CD8-positive, alpha-beta T cell (primary cell): ENCODE measurements at regions of chr10 and their contacts with region 1.

Region 1: DNA sequence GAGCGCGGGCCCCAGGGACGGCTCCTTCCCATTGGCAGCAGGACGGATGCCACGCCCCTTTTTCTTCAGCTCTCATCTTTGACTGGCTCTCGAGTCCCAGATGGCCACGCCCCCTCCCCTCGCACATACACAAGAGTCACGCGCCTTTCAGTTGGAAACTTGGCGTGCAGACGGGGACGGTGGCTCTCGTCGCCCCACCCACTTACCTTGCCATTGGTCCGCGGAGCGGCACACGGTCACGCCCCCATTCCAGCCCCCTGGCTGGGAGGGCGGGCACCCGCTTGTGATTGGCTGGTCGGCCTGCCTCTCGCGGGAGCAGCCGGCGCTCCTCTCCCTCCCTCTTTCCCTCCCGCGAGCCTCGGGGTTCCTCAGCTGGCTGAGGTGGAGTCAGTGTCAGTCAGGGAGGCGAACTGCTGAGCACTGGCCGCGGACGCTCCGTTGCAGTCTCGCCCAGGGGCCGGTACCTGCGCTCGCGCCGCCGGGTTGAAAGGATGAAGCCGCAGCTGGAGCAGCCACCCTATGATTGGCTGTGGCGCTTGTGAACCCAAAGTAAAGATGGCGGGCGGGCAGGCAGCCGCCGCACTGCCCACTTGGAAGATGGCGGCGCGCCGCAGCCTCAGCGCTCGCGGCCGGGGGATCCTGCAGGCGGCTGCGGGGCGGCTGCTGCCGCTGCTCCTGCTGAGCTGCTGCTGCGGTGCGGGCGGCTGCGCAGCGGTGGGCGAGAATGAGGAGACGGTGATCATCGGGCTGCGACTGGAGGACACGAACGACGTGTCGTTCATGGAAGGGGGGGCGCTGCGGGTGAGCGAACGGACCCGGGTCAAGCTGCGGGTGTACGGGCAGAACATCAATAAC is at the start of gene CNNM2:
- DNase-seq: peak; percentile 99 to 100 (median 100)
- ATAC-seq: peak; percentile 89
- H3K4me3 ChIP-seq: peak within 1 kb of the TSS; percentile 95 to 99
- H3K4me3 Mint-ChIP-seq: peak within 1 kb of the TSS; percentile 96
- H3K27ac ChIP-seq: peak within 1 kb of the TSS; percentile 84 to 94
- H3K27ac Mint-ChIP-seq: peak within 1 kb of the TSS; percentile 95
- H3K4me1 ChIP-seq: peaks cover 44% of the 10 kb centered on the region
- H3K4me1 Mint-ChIP-seq: peaks cover 55% of the 10 kb centered on the region
- H3K27me3 ChIP-seq: peaks cover 0 to 2% of the 10 kb centered on the region in 2 experiments
- H3K27me3 Mint-ChIP-seq: peaks cover 9% of the 10 kb centered on the region
- CTCF ChIP-seq: no peak
- total RNA-seq, gene CNNM2: 9.5 to 9.6 TPM

Region 2: DNA sequence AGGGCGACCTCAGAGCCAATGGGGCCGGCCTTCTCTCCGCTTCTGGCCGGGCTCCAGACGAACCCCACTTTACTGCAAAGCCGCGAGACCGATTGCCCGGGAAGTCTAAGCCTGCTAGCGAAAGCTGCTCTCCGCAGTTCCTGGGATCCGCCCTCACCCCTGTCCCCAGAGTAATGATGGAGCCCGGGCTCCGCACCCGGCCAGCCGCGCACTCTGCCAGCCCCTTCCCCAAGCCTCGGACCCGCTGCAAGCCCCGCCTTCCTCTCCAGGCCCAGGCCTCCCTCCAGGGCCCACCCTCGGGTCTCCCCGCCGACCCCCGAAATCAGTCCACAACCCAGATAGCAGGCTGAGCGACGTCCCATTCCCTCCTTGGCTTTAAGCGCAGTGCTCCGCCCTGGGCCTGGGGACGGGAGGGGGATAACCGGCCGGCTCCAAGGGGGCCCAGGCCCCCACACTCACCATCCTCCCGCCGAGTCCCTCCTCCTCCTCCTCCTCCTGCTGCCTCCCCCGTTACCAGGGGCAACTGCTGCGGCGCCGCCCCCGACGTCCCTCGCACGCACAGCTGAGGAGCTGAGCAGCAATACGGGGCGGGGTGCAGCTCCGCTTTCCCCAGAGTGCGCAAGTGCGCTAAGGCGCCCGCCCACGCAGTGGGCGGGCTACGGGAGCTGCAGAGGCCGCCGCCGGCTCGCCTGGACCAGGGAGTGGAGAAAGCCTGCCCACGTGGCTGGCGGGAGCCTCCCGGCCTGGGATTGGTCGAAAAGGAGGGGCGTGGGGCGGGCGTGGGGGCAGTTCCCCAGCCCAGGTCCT is 204.2 kb before region 1 on chr10 and contains the start of gene ARL3:
- CTCF ChIA-PET with region 1: no interaction called
- POLR2A ChIA-PET with region 1: no interaction called
- intact Hi-C with region 1: loop called in 1 of 2 experiments (anchors 10 kb)
- DNase-seq: peak; percentile 79 to 98 (median 94)
- ATAC-seq: peak; percentile 89
- H3K4me3 ChIP-seq: peak within 1 kb of the TSS; percentile 96 to 98
- H3K4me3 Mint-ChIP-seq: peak within 1 kb of the TSS; percentile 97
- H3K27ac ChIP-seq: peak within 1 kb of the TSS; percentile 84 to 91
- H3K27ac Mint-ChIP-seq: peak within 1 kb of the TSS; percentile 94
- H3K4me1 ChIP-seq: peaks cover 21% of the 10 kb centered on the region
- H3K4me1 Mint-ChIP-seq: peaks cover 59% of the 10 kb centered on the region
- H3K27me3 ChIP-seq: no peaks in the 10 kb centered on the region
- H3K27me3 Mint-ChIP-seq: no peaks in the 10 kb centered on the region
- CTCF ChIP-seq: peak; percentile 65
- total RNA-seq, gene ARL3: 0.49 to 0.75 TPM

Region 3: GRCh38 chr10:102752934-102753664 is 165.1 kb before region 1 on chr10:
- CTCF ChIA-PET with region 1: no interaction called
- POLR2A ChIA-PET with region 1: no interaction called
- intact Hi-C with region 1: no loop called
- DNase-seq: peak in 3 of 9 experiments; percentile 23 to 60 (median 41)
- ATAC-seq: peak; percentile 86
- H3K4me3 ChIP-seq: no peak overlapping the region
- H3K4me3 Mint-ChIP-seq: no peak overlapping the region
- H3K27ac ChIP-seq: no peak overlapping the region
- H3K27ac Mint-ChIP-seq: peak overlapping the region; percentile 58
- H3K4me1 ChIP-seq: peaks cover 18% of the 10 kb centered on the region
- H3K4me1 Mint-ChIP-seq: peaks cover 44% of the 10 kb centered on the region
- H3K27me3 ChIP-seq: no peaks in the 10 kb centered on the region
- H3K27me3 Mint-ChIP-seq: no peaks in the 10 kb centered on the region
- CTCF ChIP-seq: peak; percentile 61

Region 4: DNA sequence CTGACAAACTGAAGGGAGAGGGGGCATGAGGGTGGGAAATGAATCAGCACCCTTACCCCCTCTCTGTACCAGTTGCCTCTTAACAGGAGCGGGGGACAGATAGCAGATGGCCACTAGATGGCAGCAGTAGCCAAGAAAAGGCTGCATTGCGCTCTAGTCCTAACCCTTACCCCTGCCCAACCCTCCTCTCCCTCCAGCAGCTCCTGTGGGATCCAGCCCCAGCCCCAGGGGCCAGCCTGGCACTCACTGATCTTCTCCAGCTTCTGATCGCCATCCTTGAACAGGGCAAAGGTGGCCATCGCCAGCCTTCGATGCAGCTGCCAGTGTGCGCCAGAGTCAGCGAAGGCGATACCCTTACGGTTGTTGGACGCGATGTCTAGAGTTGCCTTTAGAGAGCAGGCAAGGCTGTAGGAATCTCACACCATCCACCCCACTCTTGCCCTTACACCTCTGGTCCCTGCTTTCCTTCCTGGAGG is 83.1 kb before region 1 on chr10:
- CTCF ChIA-PET with region 1: interaction called, 3 read pairs
- POLR2A ChIA-PET with region 1: no interaction called
- intact Hi-C with region 1: loop called in 1 of 2 experiments (anchors 5 kb)
- DNase-seq: peak; percentile 46 to 83 (median 77)
- ATAC-seq: peak; percentile 98
- H3K4me3 ChIP-seq: no peak overlapping the region
- H3K4me3 Mint-ChIP-seq: no peak overlapping the region
- H3K27ac ChIP-seq: no peak overlapping the region
- H3K27ac Mint-ChIP-seq: no peak overlapping the region
- H3K4me1 ChIP-seq: no peaks in the 10 kb centered on the region
- H3K4me1 Mint-ChIP-seq: no peaks in the 10 kb centered on the region
- H3K27me3 ChIP-seq: peaks cover 0 to 3% of the 10 kb centered on the region in 2 experiments
- H3K27me3 Mint-ChIP-seq: peaks cover 2% of the 10 kb centered on the region
- CTCF ChIP-seq: peak; percentile 80

Region 5: DNA sequence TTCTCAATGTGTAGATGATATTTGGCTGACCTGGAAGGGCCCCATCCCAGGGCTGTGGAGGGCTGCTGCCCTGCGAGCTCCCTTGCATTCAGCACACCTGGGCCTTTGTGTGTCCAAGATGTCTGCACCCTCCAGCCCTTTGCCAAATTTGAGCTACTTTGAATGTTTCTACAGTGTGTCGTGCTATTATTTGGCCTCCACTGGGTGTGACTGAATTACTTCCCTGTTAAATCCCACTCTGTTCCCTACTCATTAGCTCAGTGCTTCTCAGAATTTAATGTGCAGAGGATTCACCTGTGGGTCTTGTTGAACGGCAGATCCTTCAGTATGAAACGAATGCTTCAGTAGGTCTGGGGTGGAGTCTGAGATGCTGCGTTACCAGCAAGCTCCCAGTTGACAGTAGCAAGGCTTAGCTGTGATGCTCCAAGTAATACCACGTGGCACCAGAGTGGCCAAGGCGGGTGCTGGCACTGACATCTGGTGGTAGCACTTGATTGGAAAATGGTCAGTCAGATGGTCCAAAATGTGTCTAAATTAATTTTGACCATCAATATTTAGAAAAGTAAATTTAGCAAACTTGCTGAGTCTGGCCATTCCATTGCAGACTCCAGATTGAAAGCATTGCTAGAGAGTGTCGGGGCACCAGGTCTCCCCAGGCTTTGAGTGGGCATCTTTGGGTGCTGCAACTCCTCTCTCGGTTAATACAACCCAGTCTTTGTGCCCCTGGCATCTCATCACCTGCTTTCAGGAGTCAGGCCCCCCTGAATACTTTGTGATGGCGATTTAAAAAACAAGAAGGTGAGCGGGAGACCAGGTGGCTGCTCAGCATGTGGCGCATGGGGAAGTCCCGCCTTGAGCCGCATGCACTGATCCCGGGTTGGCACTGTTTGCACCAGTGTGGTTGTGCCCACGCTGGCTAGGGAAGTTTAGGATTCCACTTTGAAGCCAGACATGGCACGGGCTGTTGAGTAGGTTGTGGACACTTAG is 144.7 kb after region 1 on chr10:
- CTCF ChIA-PET with region 1: interaction called, 77 read pairs
- POLR2A ChIA-PET with region 1: interaction called, 5 read pairs
- intact Hi-C with region 1: no loop called
- DNase-seq: no peak
- ATAC-seq: no peak
- H3K4me3 ChIP-seq: no peak overlapping the region
- H3K4me3 Mint-ChIP-seq: no peak overlapping the region
- H3K27ac ChIP-seq: no peak overlapping the region
- H3K27ac Mint-ChIP-seq: no peak overlapping the region
- H3K4me1 ChIP-seq: no peaks in the 10 kb centered on the region
- H3K4me1 Mint-ChIP-seq: no peaks in the 10 kb centered on the region
- H3K27me3 ChIP-seq: no peaks in the 10 kb centered on the region
- H3K27me3 Mint-ChIP-seq: no peaks in the 10 kb centered on the region
- CTCF ChIP-seq: no peak

Region 6: DNA sequence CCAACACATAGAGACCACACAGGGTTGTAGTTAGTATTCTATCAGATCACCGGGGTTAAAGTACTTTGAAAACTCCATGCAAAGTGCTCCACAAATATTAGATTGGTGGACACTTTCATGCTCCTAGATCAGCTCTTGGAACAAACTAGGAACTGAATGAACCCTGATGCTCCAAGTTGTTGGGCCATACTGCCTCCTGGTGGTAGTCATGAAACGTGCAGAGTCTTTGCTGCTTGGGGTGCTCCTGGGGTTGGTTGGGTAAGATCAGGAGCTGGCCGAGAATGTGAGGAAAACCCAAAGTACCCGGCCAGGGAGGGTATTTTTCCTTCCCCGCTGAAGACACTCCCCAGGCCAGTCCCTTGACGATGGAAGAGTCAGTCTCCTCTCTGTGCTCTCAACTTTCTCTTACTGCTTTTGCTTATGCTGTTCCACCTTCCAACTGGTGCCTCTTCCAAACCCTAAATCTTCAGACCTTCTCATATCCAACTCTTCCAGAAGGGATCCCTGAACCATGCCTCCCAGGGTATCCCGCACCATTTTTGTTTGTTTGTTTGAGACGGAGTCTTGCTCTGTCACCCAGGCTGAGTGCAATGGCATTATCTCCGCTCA is 326.6 kb after region 1 on chr10:
- CTCF ChIA-PET with region 1: interaction called, 42 read pairs
- POLR2A ChIA-PET with region 1: interaction called, 7 read pairs
- intact Hi-C with region 1: loop called in 1 of 2 experiments (anchors 1 kb)
- DNase-seq: peak; percentile 29 to 77 (median 58)
- ATAC-seq: peak; percentile 49
- H3K4me3 ChIP-seq: no peak overlapping the region
- H3K4me3 Mint-ChIP-seq: no peak overlapping the region
- H3K27ac ChIP-seq: no peak overlapping the region
- H3K27ac Mint-ChIP-seq: no peak overlapping the region
- H3K4me1 ChIP-seq: no peaks in the 10 kb centered on the region
- H3K4me1 Mint-ChIP-seq: peaks cover 5% of the 10 kb centered on the region
- H3K27me3 ChIP-seq: no peaks in the 10 kb centered on the region
- H3K27me3 Mint-ChIP-seq: no peaks in the 10 kb centered on the region
- CTCF ChIP-seq: peak; percentile 82

Region 7: GRCh38 chr10:103367782-103368518 is 449.8 kb after region 1 on chr10 and contains the start of gene TAF5:
- CTCF ChIA-PET with region 1: no interaction called
- POLR2A ChIA-PET with region 1: no interaction called
- intact Hi-C with region 1: loop called (anchors 1 to 5 kb)
- DNase-seq: peak; percentile 77 to 97 (median 90)
- ATAC-seq: peak; percentile 66
- H3K4me3 ChIP-seq: peak within 1 kb of the TSS; percentile 57 to 93
- H3K4me3 Mint-ChIP-seq: peak within 1 kb of the TSS; percentile 91
- H3K27ac ChIP-seq: peak within 1 kb of the TSS; percentile 70 to 72
- H3K27ac Mint-ChIP-seq: peak within 1 kb of the TSS; percentile 91
- H3K4me1 ChIP-seq: peaks cover 12% of the 10 kb centered on the region
- H3K4me1 Mint-ChIP-seq: peaks cover 24% of the 10 kb centered on the region
- H3K27me3 ChIP-seq: no peaks in the 10 kb centered on the region
- H3K27me3 Mint-ChIP-seq: no peaks in the 10 kb centered on the region
- CTCF ChIP-seq: no peak
- total RNA-seq, gene TAF5: 3.2 to 4.0 TPM